ENCODE measurements at regions of chr10 and their contacts with region 1.

Region 1: DNA sequence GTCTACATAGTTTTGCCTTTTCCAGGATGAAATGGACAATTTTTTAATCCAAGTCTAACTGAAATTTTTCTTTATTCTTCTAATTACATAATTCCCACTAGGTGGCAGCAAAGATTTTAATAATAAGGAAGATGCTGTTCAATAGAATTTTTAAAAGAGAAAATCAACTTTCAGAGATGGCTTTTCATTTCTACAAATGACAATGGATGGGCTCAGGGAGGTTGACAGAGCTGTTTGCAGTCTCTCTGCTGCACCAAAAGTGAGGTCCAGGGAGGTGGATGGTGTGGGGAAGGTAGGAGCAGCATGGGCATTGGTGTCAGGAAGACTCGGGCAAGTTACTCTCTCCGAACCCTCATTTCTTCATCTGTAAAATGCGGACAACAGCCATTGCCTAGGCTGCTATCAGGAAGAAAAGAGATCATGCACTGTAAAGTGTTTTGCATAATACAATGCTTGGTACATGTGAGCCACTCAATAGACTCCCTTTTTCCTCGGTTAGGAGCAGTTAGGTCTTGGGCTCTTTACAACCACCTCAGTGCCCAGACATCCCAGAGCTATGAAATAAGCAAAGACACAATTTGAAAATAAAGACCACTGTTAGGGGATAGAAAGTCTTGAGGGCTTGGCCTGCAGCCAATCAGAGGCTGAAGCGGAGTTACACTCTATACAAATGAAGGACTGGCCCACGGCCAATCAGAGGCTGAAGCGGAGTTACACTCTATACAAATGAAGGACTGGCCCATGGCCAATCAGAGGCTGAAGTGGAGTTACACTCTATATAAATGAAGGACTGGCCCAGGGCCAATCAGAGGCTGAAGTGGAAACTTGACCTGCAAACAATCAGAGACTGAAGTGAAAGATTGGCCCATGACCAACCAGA is 107.1 kb downstream of the ABLIM1 start:
- DNase-seq: peak; percentile 31 to 55 (median 55)
- H3K4me3 ChIP-seq: no peak overlapping the region
- H3K27ac ChIP-seq: no peak overlapping the region
- H3K4me1 ChIP-seq: peaks cover 0 to 16% (median 4%) of the 10 kb centered on the region in 4 experiments
- H3K27me3 ChIP-seq: no peaks in the 10 kb centered on the region

Region 2: GRCh38 chr10:114581071-114581470 is 30.1 kb after region 1 on chr10:
- CTCF ChIA-PET with region 1: no interaction called
- POLR2A ChIA-PET with region 1: no interaction called
- DNase-seq: no peak
- H3K4me3 ChIP-seq: no peak overlapping the region
- H3K27ac ChIP-seq: no peak overlapping the region
- H3K4me1 ChIP-seq: peaks cover 0 to 4% (median 0%) of the 10 kb centered on the region in 4 experiments
- H3K27me3 ChIP-seq: no peaks in the 10 kb centered on the region

Region 3: GRCh38 chr10:114694752-114695151 is 143.8 kb after region 1 on chr10:
- CTCF ChIA-PET with region 1: interaction called, 23 read pairs
- POLR2A ChIA-PET with region 1: no interaction called
- DNase-seq: peak in 2 of 3 donors; percentile 40 to 46
- H3K4me3 ChIP-seq: no peak overlapping the region
- H3K27ac ChIP-seq: no peak overlapping the region
- H3K4me1 ChIP-seq: peaks cover 0 to 24% (median 11%) of the 10 kb centered on the region in 4 experiments
- H3K27me3 ChIP-seq: no peaks in the 10 kb centered on the region

Region 4: DNA sequence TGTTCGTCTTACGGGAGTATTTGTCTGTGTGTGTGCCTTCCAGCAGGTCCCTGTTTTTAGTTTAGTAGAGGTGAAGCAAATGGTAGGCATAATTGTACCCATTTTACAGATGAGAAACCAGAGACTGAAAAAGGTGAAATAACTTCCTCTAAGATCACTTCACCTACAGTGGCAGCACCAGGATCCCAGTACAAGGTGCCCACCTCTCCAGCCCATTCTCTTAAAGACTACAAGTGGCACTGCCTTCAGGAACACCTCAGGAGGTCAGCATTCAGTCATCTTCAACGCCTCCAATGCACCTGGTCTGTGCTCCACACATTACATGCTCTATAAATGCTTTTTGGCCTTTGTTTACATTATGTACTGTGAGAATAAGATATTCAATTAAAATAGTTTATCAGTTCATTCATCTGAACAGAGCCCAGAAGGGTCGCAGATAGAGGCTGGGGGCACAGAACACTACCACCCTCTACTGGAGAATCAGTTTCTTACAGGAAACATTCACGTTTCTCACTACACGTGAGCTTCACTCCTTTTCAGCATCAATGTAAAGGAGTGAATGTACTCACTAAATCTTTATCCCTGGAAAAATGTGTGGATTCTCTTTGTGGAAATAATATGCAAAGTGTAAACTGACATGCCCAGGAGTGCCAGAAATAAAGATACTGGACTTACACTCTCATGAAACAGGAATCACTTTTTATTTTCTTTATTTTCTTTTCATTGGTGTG is 152.5 kb after region 1 on chr10:
- CTCF ChIA-PET with region 1: interaction called, 69 read pairs
- POLR2A ChIA-PET with region 1: no interaction called
- DNase-seq: peak; percentile 61 to 83 (median 81)
- H3K4me3 ChIP-seq: no peak overlapping the region
- H3K27ac ChIP-seq: no peak overlapping the region
- H3K4me1 ChIP-seq: peaks cover 0 to 5% (median under 1%) of the 10 kb centered on the region in 4 experiments
- H3K27me3 ChIP-seq: no peaks in the 10 kb centered on the region

Region 5: GRCh38 chr10:114779803-114780609 is 229.0 kb after region 1 on chr10:
- CTCF ChIA-PET with region 1: interaction called, 76 read pairs
- POLR2A ChIA-PET with region 1: no interaction called
- DNase-seq: peak in 2 of 3 donors; percentile 43 to 58
- H3K4me3 ChIP-seq: no peak overlapping the region
- H3K27ac ChIP-seq: no peak overlapping the region
- H3K4me1 ChIP-seq: peaks cover 2 to 12% (median 11%) of the 10 kb centered on the region in 4 experiments
- H3K27me3 ChIP-seq: no peaks in the 10 kb centered on the region

Measured in common myeloid progenitor, CD34-positive (primary cell).